Activated CD8-positive, alpha-beta memory T cell treated with anti-CD3 and anti-CD28 coated beads, Interleukin-2, amount 10 ng/mL, durations not matched to agents 7 days and 5 days (primary cell): ENCODE measurements at regions of chr4 and their contacts with region 1.

Region 1: DNA sequence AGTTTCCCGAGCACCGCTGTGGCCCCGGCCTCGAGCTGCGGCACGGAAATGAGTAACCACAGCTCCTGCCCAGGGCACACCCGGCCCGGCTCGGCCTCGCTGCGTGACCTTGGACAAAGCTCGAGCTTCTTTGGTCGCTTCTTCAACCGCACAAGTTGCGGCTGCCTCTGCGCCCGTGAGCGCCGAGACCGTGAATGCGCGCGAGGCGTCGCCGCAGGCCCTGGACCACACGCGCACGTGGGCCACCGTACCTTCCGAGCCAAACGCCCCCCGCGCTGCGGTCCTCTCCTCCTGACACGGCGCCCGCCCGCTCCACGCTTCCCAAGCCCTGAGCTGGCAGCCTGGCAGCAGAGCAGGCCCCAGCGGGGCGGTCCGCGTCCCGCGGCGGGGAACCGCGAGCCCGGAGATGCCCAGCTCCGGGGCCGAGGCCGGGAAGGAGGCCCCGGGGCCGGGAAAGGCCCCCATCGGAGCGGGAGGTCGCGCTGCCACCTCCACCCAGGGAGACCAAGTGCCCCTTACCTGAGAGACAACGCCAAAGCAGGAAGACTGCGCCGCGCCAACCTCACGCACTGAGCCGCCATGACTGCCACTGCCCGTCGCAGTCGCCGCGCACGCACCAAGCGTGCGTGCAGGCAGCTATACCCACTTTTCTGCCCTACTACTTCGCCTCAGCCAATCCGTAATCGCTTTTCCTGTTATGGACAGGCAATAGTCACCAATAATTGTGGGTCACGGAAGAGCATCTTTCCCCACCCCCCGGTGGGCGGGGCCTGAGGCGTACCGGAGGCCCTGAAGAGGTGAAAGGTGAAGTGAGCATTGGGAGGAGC is at the start of gene GRPEL1:
- DNase-seq: peak; percentile 100
- ATAC-seq: peak; percentile 93
- H3K4me3 Mint-ChIP-seq: peak within 1 kb of the TSS; percentile 87
- H3K27ac Mint-ChIP-seq: peak within 1 kb of the TSS; percentile 93
- H3K4me1 Mint-ChIP-seq: peaks cover 42% of the 10 kb centered on the region
- H3K27me3 Mint-ChIP-seq: peaks cover 14% of the 10 kb centered on the region
- total RNA-seq, gene GRPEL1: 40.0 to 59.9 TPM

Region 2: GRCh38 chr4:6716018-6716911 is 351.4 kb before region 1 on chr4 and contains the start of gene BLOC1S4:
- CTCF ChIA-PET with region 1: interaction called, 84 read pairs
- DNase-seq: peak; percentile 92
- ATAC-seq: peak; percentile 90
- H3K4me3 Mint-ChIP-seq: peak within 1 kb of the TSS; percentile 88
- H3K27ac Mint-ChIP-seq: peak within 1 kb of the TSS; percentile 93
- H3K4me1 Mint-ChIP-seq: peaks cover 32% of the 10 kb centered on the region
- H3K27me3 Mint-ChIP-seq: no peaks in the 10 kb centered on the region
- total RNA-seq, gene BLOC1S4: 21.8 to 22.3 TPM

Region 3: GRCh38 chr4:6974138-6974848 is 93.4 kb before region 1 on chr4:
- CTCF ChIA-PET with region 1: interaction called, 20 read pairs
- DNase-seq: peak; percentile 87
- ATAC-seq: peak; percentile 92
- H3K4me3 Mint-ChIP-seq: no peak overlapping the region
- H3K27ac Mint-ChIP-seq: no peak overlapping the region
- H3K4me1 Mint-ChIP-seq: peaks cover 16% of the 10 kb centered on the region
- H3K27me3 Mint-ChIP-seq: no peaks in the 10 kb centered on the region

Region 4: GRCh38 chr4:7042697-7043464 is 24.8 kb before region 1 on chr4 and contains the start of gene TADA2B:
- CTCF ChIA-PET with region 1: interaction called, 153 read pairs
- DNase-seq: peak; percentile 95
- ATAC-seq: peak; percentile 91
- H3K4me3 Mint-ChIP-seq: peak within 1 kb of the TSS; percentile 84
- H3K27ac Mint-ChIP-seq: peak within 1 kb of the TSS; percentile 72
- H3K4me1 Mint-ChIP-seq: peaks cover 40% of the 10 kb centered on the region
- H3K27me3 Mint-ChIP-seq: peaks cover 11% of the 10 kb centered on the region
- total RNA-seq, gene TADA2B: 16.9 to 21.4 TPM

Region 5: GRCh38 chr4:7101692-7102515 is 34.2 kb after region 1 on chr4:
- CTCF ChIA-PET with region 1: interaction called, 12 read pairs
- DNase-seq: peak; percentile 78
- ATAC-seq: peak; percentile 55
- H3K4me3 Mint-ChIP-seq: peak overlapping the region; percentile 85
- H3K27ac Mint-ChIP-seq: peak overlapping the region; percentile 9
- H3K4me1 Mint-ChIP-seq: peaks cover 13% of the 10 kb centered on the region
- H3K27me3 Mint-ChIP-seq: peaks cover 27% of the 10 kb centered on the region

Region 6: GRCh38 chr4:7236847-7237246 is 169.2 kb after region 1 on chr4:
- CTCF ChIA-PET with region 1: no interaction called
- DNase-seq: no peak
- ATAC-seq: no peak
- H3K4me3 Mint-ChIP-seq: no peak overlapping the region
- H3K27ac Mint-ChIP-seq: no peak overlapping the region
- H3K4me1 Mint-ChIP-seq: no peaks in the 10 kb centered on the region
- H3K27me3 Mint-ChIP-seq: no peaks in the 10 kb centered on the region